BJ (cell line): ENCODE measurements at regions of chr11 and their contacts with region 1.

Region 1: GRCh38 chr11:15208378-15209222 is 93.9 kb downstream of the INSC start:
- DNase-seq: no peak
- H3K4me3 ChIP-seq: no peak overlapping the region
- H3K27me3 ChIP-seq: peaks cover 6% of the 10 kb centered on the region
- CTCF ChIP-seq: peak; percentile 90

Region 2: GRCh38 chr11:15101072-15101709 is 107.4 kb before region 1 on chr11:
- CTCF ChIA-PET with region 1: interaction called, 276 read pairs
- POLR2A ChIA-PET with region 1: no interaction called
- DNase-seq: no peak
- H3K4me3 ChIP-seq: no peak overlapping the region
- H3K27me3 ChIP-seq: no peaks in the 10 kb centered on the region; the same call in 1 of the 2 replicates
- CTCF ChIP-seq: peak; percentile 96

Region 3: GRCh38 chr11:15148169-15148568 is 60.4 kb before region 1 on chr11:
- CTCF ChIA-PET with region 1: no interaction called
- POLR2A ChIA-PET with region 1: no interaction called
- DNase-seq: no peak
- H3K4me3 ChIP-seq: no peak overlapping the region
- H3K27me3 ChIP-seq: no peaks in the 10 kb centered on the region
- CTCF ChIP-seq: no peak

Region 4: DNA sequence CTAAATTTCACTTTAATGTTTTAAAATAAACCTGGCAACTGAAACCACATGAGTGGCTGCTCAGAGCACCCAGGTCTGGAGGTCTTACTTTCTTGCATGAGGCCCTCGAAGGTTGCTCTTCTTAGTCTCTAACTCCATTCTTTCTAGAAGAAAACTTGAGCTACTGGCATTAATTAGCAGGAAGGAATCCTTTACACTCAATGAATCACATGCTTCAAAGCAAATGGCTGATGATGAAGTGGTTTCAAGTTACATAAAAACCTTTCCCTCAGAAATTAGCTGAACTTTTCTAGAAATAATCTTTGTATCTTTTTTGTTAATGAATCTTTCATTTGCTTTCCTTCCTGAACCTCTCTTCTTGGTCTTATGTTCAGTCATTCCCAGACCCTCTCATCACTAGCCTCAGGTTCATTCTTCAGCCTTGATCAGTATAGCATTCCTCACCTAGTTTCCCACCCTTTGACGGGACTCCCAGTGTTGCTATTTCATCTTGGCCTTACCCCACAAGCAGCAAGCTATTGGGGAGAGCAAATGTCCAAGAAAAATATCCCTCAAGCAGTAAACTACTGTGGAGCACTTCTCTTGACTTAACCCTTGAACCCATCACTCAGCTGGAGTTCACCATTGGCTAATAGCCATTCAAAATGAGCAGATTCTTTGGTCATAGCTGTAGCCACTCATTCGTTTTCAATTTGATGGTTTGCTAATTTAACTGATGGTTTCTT is 18.8 kb before region 1 on chr11:
- CTCF ChIA-PET with region 1: interaction called, 10 read pairs
- POLR2A ChIA-PET with region 1: no interaction called
- DNase-seq: no peak
- H3K4me3 ChIP-seq: no peak overlapping the region
- H3K27me3 ChIP-seq: no peaks in the 10 kb centered on the region
- CTCF ChIP-seq: no peak

Region 5: GRCh38 chr11:15641271-15642045 is 432.9 kb after region 1 on chr11:
- CTCF ChIA-PET with region 1: no interaction called
- POLR2A ChIA-PET with region 1: no interaction called
- DNase-seq: no peak
- H3K4me3 ChIP-seq: no peak overlapping the region
- H3K27me3 ChIP-seq: peaks cover 6% of the 10 kb centered on the region; the same call in 1 of the 2 replicates
- CTCF ChIP-seq: no peak